ENCODE measurements at regions of chr6 and their contacts with region 1.

Region 1: DNA sequence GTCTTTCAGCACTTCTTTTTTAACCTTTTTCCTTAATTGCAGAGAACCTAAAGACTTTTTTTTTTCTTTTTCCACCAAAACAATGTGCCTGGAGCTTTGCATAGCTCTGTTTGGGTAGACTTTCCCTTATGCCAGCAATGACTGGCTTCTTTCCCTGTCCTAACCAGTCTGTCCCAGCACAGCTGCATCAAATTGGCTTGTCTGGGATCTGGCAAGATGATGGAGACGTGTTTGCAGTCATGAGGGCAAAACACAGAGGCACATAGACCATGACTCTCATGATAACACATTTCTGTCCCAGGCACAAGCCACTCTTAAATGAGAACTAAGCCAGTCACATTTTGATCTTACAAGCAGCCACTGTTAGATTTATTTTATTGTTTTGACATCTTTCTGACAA is 16.5 kb downstream of the HEY2 start:
- DNase-seq: no peak
- ATAC-seq: no peak
- H3K4me3 ChIP-seq: no peak overlapping the region
- H3K27ac ChIP-seq: no peak overlapping the region
- H3K4me1 ChIP-seq: no peaks in the 10 kb centered on the region
- H3K27me3 ChIP-seq: peaks cover 20% of the 10 kb centered on the region; the same call in 1 of the 2 replicates
- CTCF ChIP-seq: no peak

Region 2: GRCh38 chr6:124622351-124622750 is 1143.6 kb before region 1 on chr6:
- CTCF ChIA-PET with region 1: no interaction called
- POLR2A ChIA-PET with region 1: no interaction called
- in situ Hi-C with region 1: no loop called
- intact Hi-C with region 1: no loop called
- DNase-seq: no peak
- ATAC-seq: no peak
- H3K4me3 ChIP-seq: no peak overlapping the region
- H3K27ac ChIP-seq: no peak overlapping the region
- H3K4me1 ChIP-seq: no peaks in the 10 kb centered on the region
- H3K27me3 ChIP-seq: no peaks in the 10 kb centered on the region
- CTCF ChIP-seq: no peak

Region 3: DNA sequence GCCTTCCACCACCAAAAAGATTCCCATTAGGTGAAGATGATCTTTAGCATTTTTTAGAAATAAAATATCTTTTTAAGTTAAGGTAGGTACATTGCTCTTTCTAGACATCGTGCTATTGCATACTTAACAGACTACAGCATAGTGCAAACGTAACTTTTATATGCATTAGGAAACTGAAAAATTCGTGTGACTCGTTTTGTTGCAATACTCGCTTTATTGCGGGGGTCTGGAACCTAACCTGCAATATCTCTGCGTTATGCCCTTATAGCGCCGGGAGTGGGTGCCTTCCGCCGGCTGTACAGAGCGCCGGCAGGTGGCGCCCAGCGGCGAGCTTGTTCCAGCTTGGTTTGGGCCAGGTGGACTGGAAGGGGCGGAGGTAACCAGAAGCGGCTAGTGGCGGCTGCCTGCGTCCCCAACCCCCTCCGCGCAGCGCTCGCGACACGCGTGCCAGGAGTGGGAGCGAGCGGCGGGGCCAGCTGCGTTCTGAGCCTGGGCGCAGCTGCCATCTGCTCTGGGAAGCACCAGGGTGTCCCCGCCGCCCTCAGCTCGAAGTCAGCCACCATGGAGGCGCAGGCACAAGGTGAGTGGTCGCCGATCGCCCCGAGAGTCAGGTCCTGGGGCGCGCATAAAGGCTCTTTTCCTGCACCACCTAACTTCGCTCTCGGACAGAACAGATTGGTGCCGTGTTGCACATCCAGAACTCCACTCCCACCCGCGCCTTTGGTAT is 612.4 kb before region 1 on chr6 and contains the start of gene TPD52L1:
- CTCF ChIA-PET with region 1: no interaction called
- POLR2A ChIA-PET with region 1: no interaction called
- in situ Hi-C with region 1: no loop called
- intact Hi-C with region 1: loop called (anchors 5 kb)
- DNase-seq: peak; percentile 25
- ATAC-seq: peak; percentile 97
- H3K4me3 ChIP-seq: peak within 1 kb of the TSS; percentile 47 to 70
- H3K27ac ChIP-seq: no peak within 1 kb of the TSS
- H3K4me1 ChIP-seq: no peaks in the 10 kb centered on the region
- H3K27me3 ChIP-seq: peaks cover 39% of the 10 kb centered on the region
- CTCF ChIP-seq: peak; percentile 99
- total RNA-seq, gene TPD52L1: 2.9 TPM

Region 4: DNA sequence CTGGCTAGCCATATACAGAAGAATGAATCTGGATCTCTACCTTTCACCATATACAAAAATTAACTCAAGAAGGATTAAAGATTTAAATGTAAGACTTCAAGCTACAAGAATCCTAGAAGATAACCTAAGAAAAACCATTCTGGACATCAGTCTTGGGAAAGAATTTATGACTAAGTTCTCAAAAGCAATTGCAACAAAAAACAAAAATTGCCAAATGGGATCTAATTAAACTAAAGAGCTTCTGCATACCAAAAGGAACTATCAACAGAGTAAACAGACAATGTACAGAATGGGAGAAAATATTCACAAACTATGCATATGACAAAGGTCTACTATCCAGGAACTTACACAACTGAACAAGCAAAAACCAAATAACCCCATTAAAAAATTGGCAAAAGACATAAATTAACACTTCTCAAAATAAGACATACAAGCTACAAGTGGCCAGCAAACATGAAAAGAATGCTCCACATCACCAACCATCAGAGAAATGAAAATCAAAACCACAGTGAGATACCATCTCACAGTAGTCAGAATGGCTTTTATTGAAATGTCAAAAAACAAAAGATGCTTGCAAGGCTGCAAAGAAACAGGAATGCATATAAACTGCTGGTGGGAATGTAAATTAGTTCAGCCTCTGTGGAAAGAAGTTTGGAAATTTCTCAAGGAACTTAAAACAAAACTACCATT is 1285.8 kb after region 1 on chr6:
- CTCF ChIA-PET with region 1: no interaction called
- POLR2A ChIA-PET with region 1: no interaction called
- in situ Hi-C with region 1: no loop called
- intact Hi-C with region 1: no loop called
- DNase-seq: no peak
- ATAC-seq: no peak
- H3K4me3 ChIP-seq: no peak overlapping the region
- H3K27ac ChIP-seq: no peak overlapping the region
- H3K4me1 ChIP-seq: no peaks in the 10 kb centered on the region
- H3K27me3 ChIP-seq: no peaks in the 10 kb centered on the region
- CTCF ChIP-seq: no peak

Measured in Panc1 (cell line).